ENCODE measurements at regions of chr12 and their contacts with region 1.

Region 1: GRCh38 chr12:82383930-82384552 is 25.7 kb downstream of the METTL25 start:
- DNase-seq: peak; percentile 85
- H3K4me3 ChIP-seq: no peak overlapping the region
- H3K27ac ChIP-seq: no peak overlapping the region
- H3K4me1 ChIP-seq: no peaks in the 10 kb centered on the region
- H3K27me3 ChIP-seq: no peaks in the 10 kb centered on the region
- CTCF ChIP-seq: peak; percentile 24 to 54
- POLR2A ChIP-seq: no peak

Region 2: GRCh38 chr12:82517027-82517426 is 133.0 kb after region 1 on chr12:
- CTCF ChIA-PET with region 1: interaction called, 4 read pairs
- POLR2A ChIA-PET with region 1: no interaction called
- dilution Hi-C with region 1: no loop called
- intact Hi-C with region 1: loop called (anchors 1 kb)
- DNase-seq: no peak
- H3K4me3 ChIP-seq: no peak overlapping the region
- H3K27ac ChIP-seq: no peak overlapping the region
- H3K4me1 ChIP-seq: no peaks in the 10 kb centered on the region
- H3K27me3 ChIP-seq: no peaks in the 10 kb centered on the region
- CTCF ChIP-seq: peak; percentile 38 to 47
- POLR2A ChIP-seq: no peak

Region 3: GRCh38 chr12:82527165-82527780 is 143.2 kb after region 1 on chr12:
- CTCF ChIA-PET with region 1: interaction called, 11 read pairs
- POLR2A ChIA-PET with region 1: no interaction called
- dilution Hi-C with region 1: no loop called
- intact Hi-C with region 1: loop called (anchors 1 kb)
- DNase-seq: peak; percentile 69
- H3K4me3 ChIP-seq: no peak overlapping the region
- H3K27ac ChIP-seq: no peak overlapping the region
- H3K4me1 ChIP-seq: no peaks in the 10 kb centered on the region
- H3K27me3 ChIP-seq: no peaks in the 10 kb centered on the region
- CTCF ChIP-seq: peak; percentile 70 to 72
- POLR2A ChIP-seq: no peak

Region 4: DNA sequence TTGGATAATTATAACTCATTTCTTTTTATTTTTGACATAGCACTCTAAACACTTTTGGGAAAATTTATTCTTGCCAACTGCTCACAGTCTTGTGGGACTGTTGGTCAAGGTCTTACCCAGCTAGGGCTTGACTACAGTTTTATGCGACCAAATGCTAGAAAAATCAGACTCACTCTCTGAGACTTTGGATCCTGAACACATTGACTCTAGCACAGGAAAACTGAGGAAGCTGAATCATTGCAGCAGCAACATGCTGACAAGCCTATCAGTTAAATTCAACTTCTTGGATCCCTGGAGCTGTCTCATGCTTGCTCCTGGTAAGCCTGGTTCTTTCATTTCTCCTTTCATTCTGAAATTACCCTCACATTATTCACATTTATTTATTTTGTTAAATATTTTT is 181.9 kb after region 1 on chr12:
- CTCF ChIA-PET with region 1: no interaction called
- POLR2A ChIA-PET with region 1: no interaction called
- dilution Hi-C with region 1: no loop called
- intact Hi-C with region 1: loop called (anchors 1 kb)
- DNase-seq: peak; percentile 71
- H3K4me3 ChIP-seq: no peak overlapping the region
- H3K27ac ChIP-seq: no peak overlapping the region
- H3K4me1 ChIP-seq: peaks cover 4% of the 10 kb centered on the region
- H3K27me3 ChIP-seq: no peaks in the 10 kb centered on the region
- CTCF ChIP-seq: no peak
- POLR2A ChIP-seq: no peak

Region 5: GRCh38 chr12:82627569-82628198 is 243.6 kb after region 1 on chr12:
- CTCF ChIA-PET with region 1: interaction called, 13 read pairs
- POLR2A ChIA-PET with region 1: no interaction called
- dilution Hi-C with region 1: no loop called
- intact Hi-C with region 1: loop called (anchors 1 kb)
- DNase-seq: peak; percentile 46
- H3K4me3 ChIP-seq: no peak overlapping the region
- H3K27ac ChIP-seq: no peak overlapping the region
- H3K4me1 ChIP-seq: no peaks in the 10 kb centered on the region
- H3K27me3 ChIP-seq: no peaks in the 10 kb centered on the region
- CTCF ChIP-seq: peak in 1 of 2 donors; percentile 47
- POLR2A ChIP-seq: no peak

Region 6: DNA sequence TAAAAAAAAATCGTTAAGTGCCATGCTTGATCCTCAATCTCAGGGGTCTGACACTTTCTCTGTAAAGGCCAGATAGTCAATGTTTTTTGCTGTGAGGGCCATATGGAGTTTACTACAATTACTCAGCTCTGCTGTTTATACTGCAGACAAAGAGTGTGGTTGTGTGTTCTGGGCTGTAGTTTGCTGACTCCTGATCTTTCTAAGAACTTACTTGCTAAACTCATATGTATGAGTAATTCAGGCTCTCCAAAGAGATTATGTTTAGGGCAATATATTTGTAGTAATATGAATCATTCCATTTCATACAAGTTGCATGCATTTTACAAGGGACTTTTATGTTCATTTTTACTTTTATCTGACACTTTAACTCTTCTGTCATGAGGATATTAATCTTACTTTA is 490.9 kb after region 1 on chr12:
- CTCF ChIA-PET with region 1: no interaction called
- POLR2A ChIA-PET with region 1: no interaction called
- dilution Hi-C with region 1: no loop called
- intact Hi-C with region 1: no loop called
- DNase-seq: no peak
- H3K4me3 ChIP-seq: no peak overlapping the region
- H3K27ac ChIP-seq: no peak overlapping the region
- H3K4me1 ChIP-seq: no peaks in the 10 kb centered on the region
- H3K27me3 ChIP-seq: no peaks in the 10 kb centered on the region
- CTCF ChIP-seq: no peak
- POLR2A ChIP-seq: no peak

Region 7: DNA sequence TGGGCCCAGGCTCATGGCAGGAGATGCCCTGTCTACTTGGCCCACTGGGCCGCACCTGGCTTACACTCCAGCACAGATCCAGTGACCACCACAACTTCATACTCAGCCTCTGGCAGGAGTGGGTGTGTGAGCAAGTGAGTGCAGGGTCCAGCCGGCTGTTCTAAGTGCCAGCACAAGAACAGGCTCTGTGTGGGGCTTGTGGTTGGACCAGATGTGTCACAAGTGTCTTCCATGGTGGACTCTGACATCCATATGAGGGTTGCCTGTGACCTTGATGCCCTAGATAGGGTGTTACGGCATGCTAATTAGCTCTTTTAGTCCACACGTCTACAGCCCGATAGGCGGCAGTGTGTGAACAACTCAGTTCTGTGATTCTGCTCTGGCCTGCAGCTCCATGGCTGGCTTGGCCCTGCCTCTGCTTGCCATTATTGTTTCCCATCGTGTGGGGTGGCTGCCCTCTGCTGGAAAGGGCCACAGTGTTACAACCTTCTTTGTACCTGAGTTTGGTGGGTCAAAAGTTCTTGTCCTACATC is 1439.5 kb after region 1 on chr12:
- CTCF ChIA-PET with region 1: no interaction called
- POLR2A ChIA-PET with region 1: no interaction called
- dilution Hi-C with region 1: no loop called
- intact Hi-C with region 1: loop called (anchors 10 kb)
- DNase-seq: peak; percentile 1
- H3K4me3 ChIP-seq: no peak overlapping the region
- H3K27ac ChIP-seq: no peak overlapping the region
- H3K4me1 ChIP-seq: no peaks in the 10 kb centered on the region
- H3K27me3 ChIP-seq: no peaks in the 10 kb centered on the region
- CTCF ChIP-seq: peak in 1 of 2 donors; percentile 25
- POLR2A ChIP-seq: no peak